ENCODE measurements at regions of chr17 and their contacts with region 1.

Region 1: DNA sequence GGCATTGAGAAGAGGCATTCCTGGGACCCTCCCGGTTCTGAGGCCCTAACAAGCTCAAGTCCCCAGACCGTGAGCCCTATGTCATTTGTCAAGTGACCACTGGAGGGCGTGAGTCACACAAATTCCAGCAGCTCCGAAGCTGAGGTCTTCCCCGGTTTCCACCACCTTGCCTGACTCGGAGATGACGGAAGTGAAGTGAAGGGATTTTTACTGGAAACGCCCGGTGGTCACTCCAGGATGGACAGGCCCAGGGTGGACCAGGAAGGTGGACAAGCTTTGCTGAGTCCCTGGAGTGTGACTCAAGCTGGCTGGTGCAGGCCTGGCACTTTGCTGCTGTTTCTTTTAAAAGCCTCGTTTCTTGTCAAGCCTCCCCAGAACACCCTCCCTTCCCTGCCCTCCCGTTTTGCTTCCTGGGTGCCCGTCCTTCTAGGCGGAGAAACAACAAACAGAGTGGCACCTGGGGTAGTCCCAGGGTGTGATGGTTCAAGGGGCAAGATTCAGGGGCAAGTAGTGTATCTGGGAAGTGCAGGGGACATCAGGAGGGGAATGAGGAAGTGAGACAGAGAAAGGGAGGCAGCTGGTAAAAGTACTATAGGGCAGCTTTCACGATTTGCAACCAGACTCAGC is 5.3 kb upstream of the NOS2 start:
- DNase-seq: peak; percentile 88
- ATAC-seq: peak; percentile 64
- H3K4me3 ChIP-seq: peak overlapping the region; percentile 33 to 60 (median 48)
- H3K4me3 Mint-ChIP-seq: peak overlapping the region; percentile 88
- H3K27ac ChIP-seq: peak overlapping the region; percentile 58 to 78
- H3K27ac Mint-ChIP-seq: peak overlapping the region; percentile 97
- H3K4me1 ChIP-seq: peaks cover 26 to 46% of the 10 kb centered on the region in 2 donors
- H3K4me1 Mint-ChIP-seq: peaks cover 38% of the 10 kb centered on the region
- H3K27me3 ChIP-seq: no peaks in the 10 kb centered on the region
- H3K27me3 Mint-ChIP-seq: peaks cover 2% of the 10 kb centered on the region
- CTCF ChIP-seq: peak; percentile 93

Region 2: DNA sequence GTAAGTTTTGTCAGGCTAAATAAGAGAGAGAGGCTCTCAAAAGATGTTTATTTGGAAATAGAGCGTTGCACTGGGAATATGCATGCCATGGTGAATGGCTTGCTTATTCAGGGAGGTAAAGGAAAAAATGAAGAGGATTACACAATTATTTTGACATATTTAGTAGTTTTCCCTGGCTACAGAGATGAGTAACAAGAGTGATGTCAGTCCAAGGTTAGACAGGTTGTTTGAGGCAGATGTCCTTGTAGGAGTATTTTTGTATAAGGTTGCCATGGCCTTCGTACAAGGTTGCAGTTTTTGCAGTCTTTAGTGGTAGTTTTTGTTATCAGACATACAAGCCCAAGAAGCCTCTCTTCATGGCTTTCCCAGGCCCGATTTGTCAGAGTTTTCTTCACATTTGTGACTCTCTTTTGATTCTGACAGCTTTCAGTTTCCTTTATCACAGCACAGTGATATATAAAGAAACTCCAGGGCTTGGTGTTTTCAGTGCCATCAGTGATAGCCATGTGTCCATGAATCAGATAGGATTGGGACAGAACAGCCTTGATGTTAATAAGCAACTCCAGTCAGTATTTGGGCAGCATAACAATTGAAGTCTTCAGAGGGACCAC is 193.4 kb before region 1 on chr17:
- CTCF ChIA-PET with region 1: no interaction called
- POLR2A ChIA-PET with region 1: no interaction called
- intact Hi-C with region 1: no loop called
- DNase-seq: no peak
- ATAC-seq: no peak
- H3K4me3 ChIP-seq: no peak overlapping the region
- H3K4me3 Mint-ChIP-seq: no peak overlapping the region
- H3K27ac ChIP-seq: no peak overlapping the region
- H3K27ac Mint-ChIP-seq: no peak overlapping the region
- H3K4me1 ChIP-seq: no peaks in the 10 kb centered on the region
- H3K4me1 Mint-ChIP-seq: no peaks in the 10 kb centered on the region
- H3K27me3 ChIP-seq: no peaks in the 10 kb centered on the region
- H3K27me3 Mint-ChIP-seq: no peaks in the 10 kb centered on the region
- CTCF ChIP-seq: no peak

Region 3: DNA sequence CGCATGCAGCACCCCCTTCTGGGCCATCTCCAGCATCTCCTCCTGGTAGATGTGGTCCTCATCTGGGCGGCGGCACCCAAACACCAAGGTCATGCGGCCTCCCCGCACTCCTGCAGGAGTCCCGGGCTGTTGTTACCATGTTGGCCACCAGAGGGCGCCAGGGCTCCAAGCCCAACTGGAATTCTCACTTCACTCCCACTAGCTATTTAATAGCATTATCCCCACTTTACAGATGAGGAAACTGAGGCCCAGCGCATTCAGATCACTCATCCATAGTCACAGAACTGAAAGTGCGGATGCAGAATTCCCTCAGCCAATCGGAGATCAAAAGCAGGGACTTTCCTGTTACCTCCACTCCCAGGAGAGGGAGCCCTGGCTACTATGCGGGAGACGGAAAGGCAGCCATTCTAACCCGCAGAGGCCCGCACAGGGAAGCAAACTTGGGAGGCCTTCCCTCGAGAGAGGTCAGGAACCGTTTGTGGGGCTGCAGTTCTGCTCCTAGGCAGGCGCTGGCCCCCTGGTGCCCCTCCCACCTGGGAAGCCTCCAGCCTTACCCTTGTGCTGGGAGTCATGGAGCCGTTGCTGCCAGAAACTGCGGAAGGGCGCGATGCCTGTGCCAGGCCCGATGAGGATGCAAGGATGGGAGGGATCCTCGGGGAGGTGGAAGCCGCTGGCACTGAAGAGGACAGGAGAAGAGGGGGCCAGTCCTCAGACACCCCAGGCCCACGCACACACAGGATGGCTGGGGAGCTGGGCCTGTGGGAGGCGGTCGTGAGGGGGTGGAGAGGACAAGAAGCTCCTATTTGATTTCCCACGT is 45.4 kb before region 1 on chr17:
- CTCF ChIA-PET with region 1: interaction called, 30 read pairs
- POLR2A ChIA-PET with region 1: no interaction called
- intact Hi-C with region 1: no loop called
- DNase-seq: peak; percentile 72
- ATAC-seq: peak; percentile 56
- H3K4me3 ChIP-seq: no peak overlapping the region
- H3K4me3 Mint-ChIP-seq: no peak overlapping the region
- H3K27ac ChIP-seq: no peak overlapping the region
- H3K27ac Mint-ChIP-seq: no peak overlapping the region
- H3K4me1 ChIP-seq: no peaks in the 10 kb centered on the region
- H3K4me1 Mint-ChIP-seq: peaks cover 3% of the 10 kb centered on the region
- H3K27me3 ChIP-seq: peaks cover 0 to 3% (median 1%) of the 10 kb centered on the region in 4 experiments
- H3K27me3 Mint-ChIP-seq: peaks cover 15% of the 10 kb centered on the region
- CTCF ChIP-seq: peak; percentile 96

Region 4: DNA sequence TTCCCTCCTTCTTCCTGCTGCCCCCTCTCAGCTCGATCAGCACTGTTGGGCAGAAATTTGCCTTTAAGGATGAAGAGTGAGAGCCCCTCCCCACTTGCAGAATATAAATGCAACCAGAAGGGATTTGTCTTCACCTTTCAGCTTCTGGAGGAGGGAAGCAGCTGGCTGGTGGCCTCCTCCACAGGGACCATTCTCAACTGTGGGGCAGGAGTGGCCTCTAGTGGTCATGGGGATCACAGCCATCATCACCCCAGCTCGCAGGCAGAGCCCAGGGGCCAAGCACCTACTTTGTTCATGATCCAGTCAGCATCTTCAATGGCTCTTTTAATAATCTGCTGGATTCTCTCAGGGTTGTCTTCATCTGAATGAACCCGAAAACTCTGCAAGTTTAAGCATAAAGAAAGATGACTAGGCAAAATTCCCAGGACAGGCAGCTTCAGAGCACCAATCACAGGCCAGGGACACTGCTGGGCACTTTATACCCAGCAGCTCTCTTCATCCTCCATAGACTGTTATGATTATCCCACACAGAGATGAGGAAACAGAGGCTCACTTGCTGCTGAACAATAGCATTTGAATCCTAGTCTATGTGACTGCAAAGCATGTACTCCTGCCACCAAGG is 74.5 kb after region 1 on chr17:
- CTCF ChIA-PET with region 1: interaction called, 252 read pairs
- POLR2A ChIA-PET with region 1: interaction called, 4 read pairs
- intact Hi-C with region 1: loop called (anchors 1 kb)
- DNase-seq: peak; percentile 71
- ATAC-seq: peak; percentile 74
- H3K4me3 ChIP-seq: no peak overlapping the region
- H3K4me3 Mint-ChIP-seq: no peak overlapping the region
- H3K27ac ChIP-seq: no peak overlapping the region
- H3K27ac Mint-ChIP-seq: no peak overlapping the region
- H3K4me1 ChIP-seq: no peaks in the 10 kb centered on the region
- H3K4me1 Mint-ChIP-seq: no peaks in the 10 kb centered on the region
- H3K27me3 ChIP-seq: no peaks in the 10 kb centered on the region
- H3K27me3 Mint-ChIP-seq: no peaks in the 10 kb centered on the region
- CTCF ChIP-seq: peak; percentile 77

Region 5: GRCh38 chr17:28041068-28041843 is 235.6 kb after region 1 on chr17:
- CTCF ChIA-PET with region 1: no interaction called
- POLR2A ChIA-PET with region 1: no interaction called
- intact Hi-C with region 1: loop called (anchors 2 kb)
- DNase-seq: peak; percentile 99
- ATAC-seq: peak; percentile 91
- H3K4me3 ChIP-seq: peak overlapping the region; percentile 71 to 78 (median 78)
- H3K4me3 Mint-ChIP-seq: peak overlapping the region; percentile 91
- H3K27ac ChIP-seq: peak overlapping the region; percentile 84 to 85
- H3K27ac Mint-ChIP-seq: peak overlapping the region; percentile 89
- H3K4me1 ChIP-seq: peaks cover 35 to 42% of the 10 kb centered on the region in 2 donors
- H3K4me1 Mint-ChIP-seq: peaks cover 45% of the 10 kb centered on the region
- H3K27me3 ChIP-seq: no peaks in the 10 kb centered on the region
- H3K27me3 Mint-ChIP-seq: no peaks in the 10 kb centered on the region
- CTCF ChIP-seq: no peak

Region 6: GRCh38 chr17:28416703-28417311 is 611.2 kb after region 1 on chr17:
- CTCF ChIA-PET with region 1: interaction called, 11 read pairs
- POLR2A ChIA-PET with region 1: no interaction called
- intact Hi-C with region 1: no loop called
- DNase-seq: peak; percentile 67
- ATAC-seq: peak; percentile 92
- H3K4me3 ChIP-seq: no peak overlapping the region
- H3K4me3 Mint-ChIP-seq: no peak overlapping the region
- H3K27ac ChIP-seq: no peak overlapping the region
- H3K27ac Mint-ChIP-seq: no peak overlapping the region
- H3K4me1 ChIP-seq: peaks cover 4% of the 10 kb centered on the region in 2 donors
- H3K4me1 Mint-ChIP-seq: peaks cover 5% of the 10 kb centered on the region
- H3K27me3 ChIP-seq: peaks cover 0 to 3% (median 0%) of the 10 kb centered on the region in 4 experiments
- H3K27me3 Mint-ChIP-seq: peaks cover 15% of the 10 kb centered on the region
- CTCF ChIP-seq: peak; percentile 91

Measured in B cell (primary cell).